Activated CD4-positive, alpha-beta memory T cell treated with anti-CD3 and anti-CD28 coated beads for 36 hours (primary cell): ENCODE measurements at regions of chr20 and their contacts with region 1.

Region 1: GRCh38 chr20:45293041-45294002 is 13.3 kb upstream of the RBPJL start:
- DNase-seq: peak; percentile 89
- H3K4me3 Mint-ChIP-seq: peak overlapping the region; percentile 65
- H3K27ac Mint-ChIP-seq: no peak overlapping the region
- H3K4me1 Mint-ChIP-seq: no peaks in the 10 kb centered on the region
- H3K27me3 Mint-ChIP-seq: peaks cover 28% of the 10 kb centered on the region

Region 2: GRCh38 chr20:45044084-45044573 is 249.2 kb before region 1 on chr20:
- CTCF ChIA-PET with region 1: interaction called, 14 read pairs
- POLR2A ChIA-PET with region 1: no interaction called
- intact Hi-C with region 1: no loop called
- DNase-seq: peak; percentile 41
- H3K4me3 Mint-ChIP-seq: no peak overlapping the region
- H3K27ac Mint-ChIP-seq: peak overlapping the region; percentile 75
- H3K4me1 Mint-ChIP-seq: peaks cover 74% of the 10 kb centered on the region
- H3K27me3 Mint-ChIP-seq: no peaks in the 10 kb centered on the region

Region 3: GRCh38 chr20:45095753-45096371 is 197.5 kb before region 1 on chr20:
- CTCF ChIA-PET with region 1: interaction called, 106 read pairs
- POLR2A ChIA-PET with region 1: no interaction called
- intact Hi-C with region 1: loop called (anchors 5 kb)
- DNase-seq: peak; percentile 69
- H3K4me3 Mint-ChIP-seq: no peak overlapping the region
- H3K27ac Mint-ChIP-seq: no peak overlapping the region
- H3K4me1 Mint-ChIP-seq: peaks cover 13% of the 10 kb centered on the region
- H3K27me3 Mint-ChIP-seq: peaks cover 30% of the 10 kb centered on the region

Region 4: GRCh38 chr20:45229264-45230056 is 63.9 kb before region 1 on chr20:
- CTCF ChIA-PET with region 1: interaction called, 14 read pairs
- POLR2A ChIA-PET with region 1: no interaction called
- intact Hi-C with region 1: no loop called
- DNase-seq: peak; percentile 75
- H3K4me3 Mint-ChIP-seq: no peak overlapping the region
- H3K27ac Mint-ChIP-seq: no peak overlapping the region
- H3K4me1 Mint-ChIP-seq: no peaks in the 10 kb centered on the region
- H3K27me3 Mint-ChIP-seq: peaks cover 18% of the 10 kb centered on the region

Region 5: GRCh38 chr20:45311589-45312211 is 18.4 kb after region 1 on chr20:
- CTCF ChIA-PET with region 1: interaction called, 61 read pairs
- POLR2A ChIA-PET with region 1: no interaction called
- intact Hi-C with region 1: no loop called
- DNase-seq: peak; percentile 78
- H3K4me3 Mint-ChIP-seq: no peak overlapping the region
- H3K27ac Mint-ChIP-seq: no peak overlapping the region
- H3K4me1 Mint-ChIP-seq: peaks cover 8% of the 10 kb centered on the region
- H3K27me3 Mint-ChIP-seq: peaks cover 32% of the 10 kb centered on the region

Region 6: DNA sequence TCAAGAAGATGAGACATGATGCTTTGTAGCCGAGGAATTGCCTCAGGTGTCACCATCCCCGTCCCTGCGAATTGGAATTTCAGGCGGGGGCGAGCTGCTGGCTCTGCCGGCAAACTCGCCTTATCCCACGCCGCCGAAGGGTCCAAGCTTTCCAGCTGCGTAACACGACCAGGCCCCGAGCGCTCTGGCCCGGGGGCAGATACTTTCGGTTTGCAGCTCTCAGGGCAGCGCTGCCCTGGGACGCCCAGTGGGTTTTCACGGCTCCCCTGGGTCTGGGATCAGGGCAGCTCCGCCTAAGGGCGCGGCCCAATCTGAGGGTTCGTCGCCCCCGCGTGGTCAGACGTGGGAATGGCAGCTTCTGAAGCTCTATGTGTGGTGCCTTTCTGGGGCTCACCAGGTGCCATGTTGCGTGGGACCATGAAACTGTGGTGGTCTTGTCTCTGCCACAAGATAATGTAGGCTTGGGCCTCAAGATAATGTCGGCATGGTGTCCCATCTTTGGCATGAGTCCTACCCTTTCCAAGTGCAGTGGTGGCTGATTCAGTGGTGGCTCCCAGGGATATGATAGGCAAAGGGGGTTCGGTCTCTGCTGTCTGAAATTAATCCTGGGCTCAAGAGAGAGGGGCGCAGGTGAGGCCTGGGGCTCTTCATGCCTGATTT is 143.5 kb after region 1 on chr20:
- CTCF ChIA-PET with region 1: interaction called, 24 read pairs
- POLR2A ChIA-PET with region 1: no interaction called
- intact Hi-C with region 1: no loop called
- DNase-seq: peak; percentile 90
- H3K4me3 Mint-ChIP-seq: peak overlapping the region; percentile 73
- H3K27ac Mint-ChIP-seq: no peak overlapping the region
- H3K4me1 Mint-ChIP-seq: peaks cover 15% of the 10 kb centered on the region
- H3K27me3 Mint-ChIP-seq: no peaks in the 10 kb centered on the region

Region 7: DNA sequence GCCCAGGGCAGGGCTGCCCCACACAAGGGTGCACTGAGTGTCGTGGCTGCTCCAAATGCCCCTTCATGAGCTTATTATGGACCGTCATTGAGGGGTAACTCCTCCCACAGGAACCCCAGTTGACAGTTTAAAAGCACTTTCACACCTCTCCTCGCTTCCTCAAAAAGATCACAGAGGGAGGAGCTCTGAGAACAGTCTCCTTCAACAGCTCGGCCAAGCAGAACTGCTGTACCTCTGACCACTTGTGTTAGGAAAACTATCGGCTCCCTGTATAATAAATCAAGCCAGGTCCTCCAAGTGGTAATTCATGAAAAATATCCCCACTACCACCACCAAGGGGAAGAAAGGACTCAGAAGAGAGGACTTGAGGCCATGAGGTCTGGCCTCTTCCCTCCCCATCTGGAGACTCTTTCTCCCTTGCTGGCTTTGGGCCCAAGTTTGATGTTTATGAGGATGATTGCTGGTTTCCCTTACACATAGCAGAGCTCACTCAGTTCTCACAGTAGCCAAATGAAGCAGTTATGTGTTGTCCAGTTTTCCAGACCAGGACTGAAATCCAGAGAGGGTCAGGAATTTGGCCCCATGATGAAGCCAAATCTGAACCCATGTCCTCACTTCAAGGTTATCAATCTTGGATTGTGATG is 549.0 kb after region 1 on chr20:
- CTCF ChIA-PET with region 1: no interaction called
- POLR2A ChIA-PET with region 1: no interaction called
- intact Hi-C with region 1: no loop called
- DNase-seq: no peak
- H3K4me3 Mint-ChIP-seq: no peak overlapping the region
- H3K27ac Mint-ChIP-seq: no peak overlapping the region
- H3K4me1 Mint-ChIP-seq: no peaks in the 10 kb centered on the region
- H3K27me3 Mint-ChIP-seq: no peaks in the 10 kb centered on the region